Prostate gland (tissue), 2 donors: ENCODE measurements at regions of chr19 and their contacts with region 1.

Region 1: GRCh38 chr19:42683917-42684513 is 56.3 kb downstream of the PSG3 start:
- DNase-seq: no peak
- H3K4me3 ChIP-seq: no peak overlapping the region
- H3K27ac ChIP-seq: no peak overlapping the region
- H3K4me1 ChIP-seq: no peaks in the 10 kb centered on the region
- H3K27me3 ChIP-seq: no peaks in the 10 kb centered on the region
- CTCF ChIP-seq: peak in 3 of 4 experiments; percentile 32 to 54 (median 44)
- POLR2A ChIP-seq: no peak

Region 2: GRCh38 chr19:42762782-42763181 is 78.8 kb after region 1 on chr19:
- intact Hi-C with region 1: loop called (anchors 10 kb)
- DNase-seq: no peak
- H3K4me3 ChIP-seq: no peak overlapping the region
- H3K27ac ChIP-seq: no peak overlapping the region
- H3K4me1 ChIP-seq: no peaks in the 10 kb centered on the region
- H3K27me3 ChIP-seq: no peaks in the 10 kb centered on the region
- CTCF ChIP-seq: no peak
- POLR2A ChIP-seq: no peak